ENCODE measurements at regions of chr17 and their contacts with region 1.

Region 1: GRCh38 chr17:57130761-57131461 is 45.9 kb downstream of the AKAP1 start:
- DNase-seq: peak; percentile 61
- H3K4me3 Mint-ChIP-seq: no peak overlapping the region
- H3K27ac Mint-ChIP-seq: peak overlapping the region; percentile 52
- H3K4me1 Mint-ChIP-seq: peaks cover 11% of the 10 kb centered on the region
- H3K27me3 Mint-ChIP-seq: no peaks in the 10 kb centered on the region

Region 2: GRCh38 chr17:57671667-57672632 is 541.0 kb after region 1 on chr17:
- intact Hi-C with region 1: loop called (anchors 1 kb)
- DNase-seq: peak; percentile 55
- H3K4me3 Mint-ChIP-seq: no peak overlapping the region
- H3K27ac Mint-ChIP-seq: no peak overlapping the region
- H3K4me1 Mint-ChIP-seq: peaks cover 27% of the 10 kb centered on the region
- H3K27me3 Mint-ChIP-seq: no peaks in the 10 kb centered on the region

Region 3: DNA sequence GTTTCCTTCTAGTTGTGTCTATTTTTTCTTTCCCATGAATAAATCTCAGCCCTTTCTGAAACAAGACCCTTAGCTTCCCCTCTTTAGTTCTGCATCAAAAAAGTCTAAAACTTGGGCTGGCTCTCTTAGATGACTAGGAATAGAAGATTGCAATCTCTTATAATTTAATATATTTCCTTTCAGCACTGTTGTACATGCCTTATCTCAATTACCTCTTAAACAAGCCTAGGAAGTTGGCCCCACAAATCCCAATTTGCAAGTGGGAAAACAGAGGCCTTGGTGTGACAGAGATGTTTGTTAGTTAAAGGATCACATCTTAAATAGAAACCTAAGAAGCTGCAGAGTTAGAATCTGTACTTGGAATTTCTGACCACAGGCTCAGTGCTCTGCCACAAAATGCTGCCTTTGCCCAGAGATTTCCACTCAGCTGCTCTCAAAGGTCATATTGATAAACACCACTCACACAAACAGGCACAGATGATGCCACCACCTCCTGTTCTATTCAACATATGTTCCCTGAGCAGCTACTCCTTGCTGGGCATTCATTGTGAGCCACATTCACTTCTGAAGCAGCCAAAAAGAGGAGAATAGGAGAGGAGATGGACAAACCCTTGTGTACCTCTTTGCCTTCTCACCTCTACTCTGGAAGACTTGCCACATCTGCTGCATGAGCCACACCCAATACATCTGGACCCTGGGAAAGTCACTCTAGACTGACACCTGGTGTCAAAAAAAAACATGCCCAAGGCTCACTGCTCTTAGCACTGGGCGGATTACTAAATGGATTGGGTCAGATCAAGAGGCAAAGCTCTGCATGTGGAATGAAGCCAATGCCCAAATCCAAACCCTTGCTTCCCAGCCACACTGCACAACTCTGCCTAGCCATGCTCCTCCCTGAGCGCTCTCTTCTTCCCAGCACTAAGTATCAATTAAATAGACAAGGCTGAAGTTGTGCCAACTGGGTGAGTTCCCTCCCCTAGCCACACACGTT is 608.8 kb after region 1 on chr17:
- intact Hi-C with region 1: loop called (anchors 1 kb)
- DNase-seq: peak; percentile 5
- H3K4me3 Mint-ChIP-seq: no peak overlapping the region
- H3K27ac Mint-ChIP-seq: no peak overlapping the region
- H3K4me1 Mint-ChIP-seq: peaks cover 6% of the 10 kb centered on the region
- H3K27me3 Mint-ChIP-seq: peaks cover 23% of the 10 kb centered on the region

Region 4: GRCh38 chr17:57747221-57748017 is 616.5 kb after region 1 on chr17:
- intact Hi-C with region 1: loop called (anchors 1 kb)
- DNase-seq: peak; percentile 10
- H3K4me3 Mint-ChIP-seq: no peak overlapping the region
- H3K27ac Mint-ChIP-seq: no peak overlapping the region
- H3K4me1 Mint-ChIP-seq: peaks cover 4% of the 10 kb centered on the region
- H3K27me3 Mint-ChIP-seq: peaks cover 24% of the 10 kb centered on the region

Region 5: GRCh38 chr17:57783106-57783742 is 652.3 kb after region 1 on chr17:
- intact Hi-C with region 1: loop called (anchors 1 kb)
- DNase-seq: peak; percentile 73
- H3K4me3 Mint-ChIP-seq: no peak overlapping the region
- H3K27ac Mint-ChIP-seq: no peak overlapping the region
- H3K4me1 Mint-ChIP-seq: no peaks in the 10 kb centered on the region
- H3K27me3 Mint-ChIP-seq: peaks cover 21% of the 10 kb centered on the region

Region 6: GRCh38 chr17:57833179-57833939 is 702.4 kb after region 1 on chr17:
- intact Hi-C with region 1: loop called (anchors 1 kb)
- DNase-seq: peak; percentile 38
- H3K4me3 Mint-ChIP-seq: no peak overlapping the region
- H3K27ac Mint-ChIP-seq: no peak overlapping the region
- H3K4me1 Mint-ChIP-seq: peaks cover 14% of the 10 kb centered on the region
- H3K27me3 Mint-ChIP-seq: no peaks in the 10 kb centered on the region

Region 7: GRCh38 chr17:57995076-57995956 is 864.4 kb after region 1 on chr17:
- intact Hi-C with region 1: loop called (anchors 5 kb)
- DNase-seq: peak; percentile 22
- H3K4me3 Mint-ChIP-seq: no peak overlapping the region
- H3K27ac Mint-ChIP-seq: no peak overlapping the region
- H3K4me1 Mint-ChIP-seq: peaks cover 58% of the 10 kb centered on the region
- H3K27me3 Mint-ChIP-seq: no peaks in the 10 kb centered on the region

Measured in activated T-helper 1 cell treated with anti-CD3 and anti-CD28 coated beads, Interleukin-12 subunit alpha, Interleukin-12 subunit beta, Interleukin-2, Interleukin-4 antibody, amounts not matched to agents 30 ng/mL and 10 ng/mL and 1 ng/mL, durations not matched to agents 14 hours and 24 hours and 36 hours (primary cell).